ENCODE measurements at regions of chr2 and their contacts with region 1.

Region 1: DNA sequence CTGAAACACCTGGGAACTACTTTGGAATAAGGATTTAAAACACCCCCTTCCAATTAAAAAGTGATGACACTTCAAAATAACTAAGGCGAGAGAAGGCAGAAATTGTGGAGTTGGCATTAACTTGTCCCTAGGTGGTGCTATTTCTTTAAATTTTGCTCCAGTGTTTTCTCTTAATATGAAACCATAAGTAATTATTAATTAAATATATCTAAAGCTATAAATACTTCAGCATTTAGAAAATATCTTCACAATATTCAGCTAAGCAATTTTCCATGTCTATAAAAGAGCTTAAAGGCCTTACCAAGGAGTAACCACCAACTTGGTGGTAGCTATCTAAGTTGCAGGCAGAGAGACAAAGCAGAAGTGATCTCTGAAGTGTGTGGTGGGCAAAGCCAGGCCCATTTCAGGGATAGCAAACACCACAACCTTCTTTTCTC is 186.8 kb upstream of the PGAP1 start:
- DNase-seq: peak; percentile 65
- H3K4me3 ChIP-seq: no peak overlapping the region
- H3K27ac ChIP-seq: no peak overlapping the region
- H3K4me1 ChIP-seq: no peaks in the 10 kb centered on the region
- H3K27me3 ChIP-seq: no peaks in the 10 kb centered on the region
- CTCF ChIP-seq: peak; percentile 24 to 41
- POLR2A ChIP-seq: no peak

Region 2: DNA sequence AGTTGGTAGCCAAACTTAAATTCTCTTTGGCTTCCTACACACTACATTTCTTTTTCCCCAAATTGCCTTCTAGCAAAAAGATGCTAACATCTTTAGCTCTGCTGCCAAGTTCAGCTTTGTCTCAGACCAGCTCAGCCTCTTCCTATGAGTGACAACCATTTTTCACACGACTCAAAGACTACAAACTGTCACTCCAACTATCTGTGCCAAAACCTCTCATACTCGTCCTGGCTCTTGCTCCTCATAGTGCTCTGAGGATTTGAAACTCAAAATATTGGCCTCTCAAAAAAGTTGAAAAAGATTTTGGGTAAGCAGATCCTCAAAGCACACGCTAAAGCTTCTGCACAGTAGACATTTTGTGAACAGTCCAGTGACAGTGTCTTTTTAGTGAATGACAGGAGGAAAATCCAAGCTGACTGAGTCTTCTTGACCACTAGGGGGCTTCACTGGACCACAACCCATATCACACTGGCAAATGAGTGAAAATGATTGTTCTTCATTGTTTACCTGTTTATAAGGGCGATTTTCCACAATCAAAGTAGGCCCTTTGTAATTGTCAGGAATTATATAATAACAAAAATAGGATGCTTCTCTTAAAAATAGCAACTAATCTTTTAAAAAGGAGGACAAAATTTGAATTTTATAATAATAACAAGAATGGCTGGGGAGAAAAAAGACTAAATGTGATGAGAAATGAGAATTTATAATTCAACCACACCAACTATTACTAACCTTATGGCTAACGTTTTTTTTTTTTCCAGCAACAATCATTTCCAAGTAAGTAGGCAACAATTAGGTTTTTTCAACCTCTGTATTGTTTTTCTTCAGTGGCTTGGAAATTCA is 101.3 kb before region 1 on chr2:
- CTCF ChIA-PET with region 1: interaction called, 17 read pairs
- POLR2A ChIA-PET with region 1: no interaction called
- dilution Hi-C with region 1: no loop called
- intact Hi-C with region 1: loop called (anchors 1 kb)
- DNase-seq: peak; percentile 60
- H3K4me3 ChIP-seq: no peak overlapping the region
- H3K27ac ChIP-seq: no peak overlapping the region
- H3K4me1 ChIP-seq: no peaks in the 10 kb centered on the region
- H3K27me3 ChIP-seq: no peaks in the 10 kb centered on the region
- CTCF ChIP-seq: peak; percentile 75 to 78
- POLR2A ChIP-seq: no peak

Region 3: DNA sequence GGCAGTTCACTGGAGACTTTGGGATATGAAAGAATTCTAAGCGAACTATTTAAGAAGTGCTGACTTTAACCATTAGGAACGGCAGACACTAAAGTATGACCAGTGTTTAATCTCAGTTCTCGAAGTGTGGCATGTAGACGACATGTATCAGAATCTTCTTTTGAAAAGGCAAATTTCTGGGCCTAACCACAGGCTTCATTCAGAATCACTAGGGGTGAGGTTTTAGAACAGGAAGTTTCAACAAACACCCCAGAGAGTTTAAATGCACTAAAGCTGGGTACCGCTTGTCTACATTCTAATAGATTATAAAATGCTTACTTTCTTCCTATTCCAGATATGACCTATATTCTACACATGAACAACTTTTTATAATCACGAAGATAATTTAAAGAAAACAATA is 17.0 kb after region 1 on chr2:
- CTCF ChIA-PET with region 1: interaction called, 56 read pairs
- POLR2A ChIA-PET with region 1: no interaction called
- dilution Hi-C with region 1: no loop called
- intact Hi-C with region 1: no loop called
- DNase-seq: no peak
- H3K4me3 ChIP-seq: no peak overlapping the region
- H3K27ac ChIP-seq: no peak overlapping the region
- H3K4me1 ChIP-seq: no peaks in the 10 kb centered on the region
- H3K27me3 ChIP-seq: no peaks in the 10 kb centered on the region
- CTCF ChIP-seq: no peak
- POLR2A ChIP-seq: no peak

Region 4: DNA sequence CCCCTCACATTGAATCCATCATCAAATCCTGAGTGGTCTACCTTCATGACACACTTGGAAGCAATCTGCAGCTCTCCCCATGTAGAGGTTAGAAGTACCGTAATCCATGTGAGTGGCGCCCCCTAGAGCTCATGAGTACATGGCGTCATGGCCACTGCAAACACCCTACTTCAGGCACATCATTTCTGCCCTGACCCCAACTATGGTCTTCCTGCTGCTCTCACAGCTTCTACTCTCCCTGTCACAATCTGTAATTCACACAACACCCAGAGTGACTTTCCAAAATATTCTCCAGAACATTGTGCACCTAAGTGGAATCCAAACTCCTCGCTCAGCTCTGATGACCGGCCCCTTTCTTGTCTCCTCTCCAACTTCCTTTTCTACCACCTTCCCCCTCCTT is 55.4 kb after region 1 on chr2:
- CTCF ChIA-PET with region 1: interaction called, 267 read pairs
- POLR2A ChIA-PET with region 1: no interaction called
- dilution Hi-C with region 1: no loop called
- intact Hi-C with region 1: loop called (anchors 1 kb)
- DNase-seq: peak; percentile 73
- H3K4me3 ChIP-seq: no peak overlapping the region
- H3K27ac ChIP-seq: no peak overlapping the region
- H3K4me1 ChIP-seq: peaks cover 3% of the 10 kb centered on the region
- H3K27me3 ChIP-seq: no peaks in the 10 kb centered on the region
- CTCF ChIP-seq: peak; percentile 74 to 84
- POLR2A ChIP-seq: no peak

Region 5: DNA sequence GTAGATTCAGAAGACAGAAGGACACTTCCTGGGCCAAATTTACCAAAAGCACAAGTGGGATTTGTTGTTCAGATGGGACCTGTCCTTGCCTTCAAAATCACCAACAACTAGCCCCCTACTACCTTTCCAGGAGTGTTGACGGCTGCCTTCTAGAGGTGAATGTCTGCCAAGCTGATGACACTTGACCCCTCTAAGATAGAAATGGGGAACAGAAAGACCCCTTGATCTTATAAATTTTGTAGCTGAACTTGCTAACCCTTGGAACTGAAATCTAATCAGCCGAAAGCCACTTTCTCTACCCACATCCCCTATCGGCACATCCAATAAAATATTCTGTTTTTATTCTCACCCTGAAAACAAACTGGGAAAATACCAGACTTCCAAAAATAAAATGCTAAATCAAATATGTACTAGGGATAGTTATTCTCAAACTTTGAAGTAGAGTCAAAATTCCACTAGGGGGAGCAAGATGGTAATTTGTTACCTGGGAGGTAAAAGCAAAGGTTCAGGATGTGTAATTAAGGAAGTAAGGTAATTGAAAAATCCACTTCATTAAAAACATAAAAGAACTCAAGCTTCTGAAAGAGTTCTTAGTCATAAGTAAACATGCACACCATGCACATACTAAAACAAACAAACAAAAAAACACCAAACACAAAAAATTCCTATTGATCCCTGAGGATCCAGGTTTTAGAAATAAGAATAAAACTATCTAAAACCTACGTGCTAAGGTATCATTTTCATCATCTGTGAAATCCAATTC is 78.1 kb after region 1 on chr2:
- CTCF ChIA-PET with region 1: interaction called, 21 read pairs
- POLR2A ChIA-PET with region 1: no interaction called
- dilution Hi-C with region 1: no loop called
- intact Hi-C with region 1: loop called (anchors 2 kb)
- DNase-seq: peak; percentile 55
- H3K4me3 ChIP-seq: no peak overlapping the region
- H3K27ac ChIP-seq: no peak overlapping the region
- H3K4me1 ChIP-seq: peaks cover 8% of the 10 kb centered on the region
- H3K27me3 ChIP-seq: peaks cover 0 to 5% of the 10 kb centered on the region in 2 experiments
- CTCF ChIP-seq: peak; percentile 36 to 37
- POLR2A ChIP-seq: no peak

Region 6: DNA sequence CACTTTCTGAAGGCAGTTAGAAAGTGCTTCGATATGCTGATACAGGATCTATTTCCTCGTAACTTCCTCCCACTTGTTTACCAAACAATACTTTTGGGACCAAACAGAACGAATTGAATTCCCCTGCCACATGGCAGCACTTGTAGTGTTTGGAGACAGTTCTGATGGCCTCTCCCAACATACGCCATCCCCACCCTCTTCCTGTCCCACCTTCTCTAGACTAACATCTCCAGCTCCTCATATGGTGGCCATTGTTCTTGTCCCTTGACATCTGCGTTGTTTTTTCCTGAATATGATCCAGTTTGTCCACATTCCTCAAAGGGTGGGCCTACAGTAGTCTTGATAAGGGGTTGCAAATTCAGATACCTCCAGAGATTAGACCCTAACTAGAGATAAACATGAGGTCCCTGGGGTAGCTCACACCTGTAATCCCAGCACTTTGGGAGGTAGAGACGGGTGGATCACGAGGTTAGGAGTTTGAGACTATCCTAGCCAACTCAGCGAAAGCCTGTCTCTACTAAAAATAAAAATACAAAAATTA is 250.8 kb after region 1 on chr2:
- CTCF ChIA-PET with region 1: interaction called, 10 read pairs
- POLR2A ChIA-PET with region 1: no interaction called
- dilution Hi-C with region 1: no loop called
- intact Hi-C with region 1: loop called (anchors 5 kb)
- DNase-seq: no peak
- H3K4me3 ChIP-seq: no peak overlapping the region
- H3K27ac ChIP-seq: no peak overlapping the region
- H3K4me1 ChIP-seq: no peaks in the 10 kb centered on the region
- H3K27me3 ChIP-seq: peaks cover 0 to 2% of the 10 kb centered on the region in 2 experiments
- CTCF ChIP-seq: no peak
- POLR2A ChIP-seq: no peak

Region 7: DNA sequence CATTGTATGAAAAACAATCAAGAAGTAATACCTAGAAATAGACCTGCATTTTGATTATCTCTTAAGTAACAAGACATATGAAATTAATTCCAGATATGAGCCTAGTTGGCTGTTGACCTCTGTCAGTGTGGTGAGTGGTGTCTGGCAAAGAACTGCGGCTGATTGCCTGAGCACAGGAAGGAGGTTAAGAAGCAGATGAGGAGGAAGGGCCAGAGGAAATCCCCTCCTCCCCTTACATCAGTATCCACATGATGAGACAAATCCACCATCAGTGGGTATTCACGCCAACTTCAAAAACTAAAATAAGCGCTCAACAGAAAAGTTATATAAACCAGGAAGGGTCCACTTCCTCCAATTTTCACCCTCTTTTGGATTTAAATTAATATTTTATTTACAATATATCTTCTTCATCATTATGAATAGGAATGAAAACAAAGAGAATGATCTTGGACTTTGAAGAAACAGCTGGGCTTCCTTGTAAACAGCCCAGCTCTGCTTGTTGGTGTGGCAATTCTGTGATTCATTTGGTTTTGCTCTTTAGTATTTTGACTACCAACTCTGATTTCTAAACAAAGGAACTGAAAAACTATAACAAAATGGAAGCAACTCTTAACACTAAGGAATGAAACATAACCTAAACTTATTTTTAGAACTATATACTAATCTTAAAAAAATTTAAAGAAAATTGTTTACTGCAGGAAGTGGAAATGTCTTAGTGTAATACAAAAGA is 534.8 kb after region 1 on chr2:
- CTCF ChIA-PET with region 1: no interaction called
- POLR2A ChIA-PET with region 1: no interaction called
- dilution Hi-C with region 1: no loop called
- intact Hi-C with region 1: no loop called
- DNase-seq: peak; percentile 20
- H3K4me3 ChIP-seq: no peak overlapping the region
- H3K27ac ChIP-seq: no peak overlapping the region
- H3K4me1 ChIP-seq: no peaks in the 10 kb centered on the region
- H3K27me3 ChIP-seq: no peaks in the 10 kb centered on the region
- CTCF ChIP-seq: no peak
- POLR2A ChIP-seq: no peak

Region 8: DNA sequence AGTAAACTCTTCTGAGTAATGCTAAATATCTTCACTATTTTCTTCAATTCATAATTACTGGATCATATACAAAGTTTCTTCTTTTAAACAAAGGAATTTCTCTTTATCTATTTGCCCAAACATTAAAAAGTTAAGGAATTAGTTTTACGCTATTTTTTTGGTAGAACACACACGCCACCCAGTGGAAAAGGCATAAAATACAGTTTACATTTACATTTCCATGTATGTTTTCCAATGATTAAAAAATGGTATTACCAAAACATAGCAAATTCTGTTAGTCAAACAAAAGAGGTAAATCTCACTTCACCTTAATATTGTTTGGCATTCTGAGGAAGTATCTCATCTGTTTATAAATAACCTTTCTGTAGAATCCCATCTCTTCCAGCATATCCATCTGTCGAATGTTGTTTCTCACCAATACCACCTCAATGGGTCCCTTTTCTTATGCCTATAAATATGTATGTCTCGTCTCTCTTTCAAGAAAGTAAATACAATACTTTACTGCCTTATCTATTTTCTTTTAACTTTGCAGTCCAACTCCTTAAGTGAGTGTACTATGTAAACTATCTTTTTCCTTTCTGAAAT is 664.6 kb after region 1 on chr2:
- CTCF ChIA-PET with region 1: interaction called, 6 read pairs
- POLR2A ChIA-PET with region 1: no interaction called
- dilution Hi-C with region 1: no loop called
- intact Hi-C with region 1: loop called (anchors 2 kb)
- DNase-seq: peak; percentile 58
- H3K4me3 ChIP-seq: no peak overlapping the region
- H3K27ac ChIP-seq: no peak overlapping the region
- H3K4me1 ChIP-seq: no peaks in the 10 kb centered on the region
- H3K27me3 ChIP-seq: no peaks in the 10 kb centered on the region
- CTCF ChIP-seq: peak; percentile 28 to 32
- POLR2A ChIP-seq: no peak